Left lung (tissue), 14 donors: ENCODE measurements at regions of chr17 and their contacts with region 1.

Region 1: DNA sequence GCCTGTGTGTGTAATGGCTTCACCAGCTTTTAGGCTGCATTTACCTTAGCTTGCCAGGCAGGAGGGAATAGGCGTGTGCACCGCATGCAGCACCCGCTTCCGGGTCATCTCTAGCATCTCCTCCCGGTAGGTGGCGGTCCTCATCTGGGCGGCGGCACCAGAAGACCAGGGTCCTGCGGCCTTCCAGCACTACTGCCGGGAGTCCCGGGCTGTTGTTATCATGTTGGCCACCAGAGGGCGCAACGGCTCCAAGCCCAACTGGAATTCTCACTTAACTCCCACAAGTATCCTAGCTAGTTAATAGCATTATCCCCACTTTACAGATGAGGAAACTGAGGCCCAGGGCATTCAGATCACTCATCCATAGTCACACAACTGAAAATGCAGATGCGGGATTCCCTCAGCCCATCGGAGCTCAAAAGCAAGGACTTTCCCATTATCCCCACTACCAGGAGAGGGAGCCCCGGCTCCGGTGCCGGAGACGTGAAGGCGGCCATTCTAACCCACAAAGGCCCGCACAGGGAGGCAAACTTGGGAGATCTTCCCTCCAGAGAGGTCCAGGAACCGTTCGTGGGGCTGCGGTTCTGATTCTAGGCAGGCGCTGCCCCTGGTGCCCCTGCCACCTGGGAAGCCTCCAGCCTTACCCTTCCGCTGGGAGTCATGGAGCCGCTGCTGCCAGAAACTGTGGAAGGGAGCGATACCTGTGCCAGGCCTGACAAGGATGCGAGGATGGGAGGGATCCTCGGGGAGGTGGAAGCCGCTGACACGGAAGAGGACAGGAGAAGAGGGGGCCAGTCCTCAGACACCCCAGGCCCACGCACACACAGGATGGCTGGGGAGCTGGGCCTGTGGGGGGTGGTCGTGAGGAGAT is 23.9 kb downstream of the LGALS9 start:
- DNase-seq: peak; percentile 43 to 91 (median 66)
- ATAC-seq: peak; percentile 76
- H3K4me3 ChIP-seq: no peak overlapping the region
- H3K27ac ChIP-seq: no peak overlapping the region
- H3K4me1 ChIP-seq: no peaks in the 10 kb centered on the region
- H3K27me3 ChIP-seq: no peaks in the 10 kb centered on the region
- CTCF ChIP-seq: peak; percentile 87 to 96

Region 2: DNA sequence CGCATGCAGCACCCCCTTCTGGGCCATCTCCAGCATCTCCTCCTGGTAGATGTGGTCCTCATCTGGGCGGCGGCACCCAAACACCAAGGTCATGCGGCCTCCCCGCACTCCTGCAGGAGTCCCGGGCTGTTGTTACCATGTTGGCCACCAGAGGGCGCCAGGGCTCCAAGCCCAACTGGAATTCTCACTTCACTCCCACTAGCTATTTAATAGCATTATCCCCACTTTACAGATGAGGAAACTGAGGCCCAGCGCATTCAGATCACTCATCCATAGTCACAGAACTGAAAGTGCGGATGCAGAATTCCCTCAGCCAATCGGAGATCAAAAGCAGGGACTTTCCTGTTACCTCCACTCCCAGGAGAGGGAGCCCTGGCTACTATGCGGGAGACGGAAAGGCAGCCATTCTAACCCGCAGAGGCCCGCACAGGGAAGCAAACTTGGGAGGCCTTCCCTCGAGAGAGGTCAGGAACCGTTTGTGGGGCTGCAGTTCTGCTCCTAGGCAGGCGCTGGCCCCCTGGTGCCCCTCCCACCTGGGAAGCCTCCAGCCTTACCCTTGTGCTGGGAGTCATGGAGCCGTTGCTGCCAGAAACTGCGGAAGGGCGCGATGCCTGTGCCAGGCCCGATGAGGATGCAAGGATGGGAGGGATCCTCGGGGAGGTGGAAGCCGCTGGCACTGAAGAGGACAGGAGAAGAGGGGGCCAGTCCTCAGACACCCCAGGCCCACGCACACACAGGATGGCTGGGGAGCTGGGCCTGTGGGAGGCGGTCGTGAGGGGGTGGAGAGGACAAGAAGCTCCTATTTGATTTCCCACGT is 105.4 kb after region 1 on chr17:
- intact Hi-C with region 1: loop called (anchors 5 to 10 kb)
- DNase-seq: peak in 3 of 4 donors; percentile 34 to 93 (median 65)
- ATAC-seq: peak; percentile 77
- H3K4me3 ChIP-seq: no peak overlapping the region
- H3K27ac ChIP-seq: no peak overlapping the region
- H3K4me1 ChIP-seq: peaks cover 0 to 4% of the 10 kb centered on the region in 2 donors
- H3K27me3 ChIP-seq: no peaks in the 10 kb centered on the region
- CTCF ChIP-seq: peak; percentile 90 to 96

Region 3: DNA sequence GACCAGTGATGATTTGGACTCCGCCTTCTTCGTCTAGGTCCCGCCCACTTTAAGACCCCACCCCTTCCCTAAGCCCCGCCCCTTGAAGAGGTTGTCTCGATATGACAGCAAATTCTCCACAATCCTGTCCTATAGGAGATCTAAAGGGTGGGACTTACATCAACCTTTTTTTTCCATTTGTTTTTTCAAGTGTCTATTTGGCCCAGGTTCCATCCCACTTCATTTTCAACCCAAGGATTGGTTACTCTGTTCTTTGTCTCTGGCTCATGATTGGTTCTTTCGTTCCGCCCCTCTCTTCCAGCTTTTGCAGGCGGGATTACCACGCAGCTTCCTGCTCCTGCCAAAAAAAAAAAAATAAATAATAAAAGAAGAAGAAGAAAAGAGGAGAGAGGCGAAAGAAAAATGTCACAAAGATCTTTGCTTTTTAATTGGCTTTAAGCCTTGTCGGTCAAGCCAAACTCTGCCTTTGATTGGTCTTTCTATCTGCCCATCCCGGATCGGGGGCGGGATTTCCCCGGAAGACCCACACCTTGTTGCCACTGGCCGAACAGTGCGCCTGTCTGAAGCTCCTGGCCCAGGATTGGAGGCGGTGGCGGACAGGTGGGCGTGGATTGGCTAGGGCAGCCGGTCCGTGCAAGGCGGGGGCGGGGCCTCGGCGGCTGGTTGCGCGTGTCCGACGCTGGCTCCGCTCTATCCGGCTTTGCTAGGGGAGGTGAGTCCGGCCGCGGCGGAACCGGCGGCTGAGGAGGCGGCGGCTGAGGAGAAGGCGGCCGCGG is 386.4 kb after region 1 on chr17:
- intact Hi-C with region 1: no loop called
- DNase-seq: peak; percentile 99 to 100 (median 100)
- ATAC-seq: peak; percentile 99
- H3K4me3 ChIP-seq: peak overlapping the region; percentile 86 to 87
- H3K27ac ChIP-seq: peak overlapping the region; percentile 84 to 95
- H3K4me1 ChIP-seq: peaks cover 11 to 43% of the 10 kb centered on the region in 2 donors
- H3K27me3 ChIP-seq: no peaks in the 10 kb centered on the region
- CTCF ChIP-seq: no peak